MCF 10A (cell line): ENCODE measurements at regions of chr13 and their contacts with region 1.

Region 1: DNA sequence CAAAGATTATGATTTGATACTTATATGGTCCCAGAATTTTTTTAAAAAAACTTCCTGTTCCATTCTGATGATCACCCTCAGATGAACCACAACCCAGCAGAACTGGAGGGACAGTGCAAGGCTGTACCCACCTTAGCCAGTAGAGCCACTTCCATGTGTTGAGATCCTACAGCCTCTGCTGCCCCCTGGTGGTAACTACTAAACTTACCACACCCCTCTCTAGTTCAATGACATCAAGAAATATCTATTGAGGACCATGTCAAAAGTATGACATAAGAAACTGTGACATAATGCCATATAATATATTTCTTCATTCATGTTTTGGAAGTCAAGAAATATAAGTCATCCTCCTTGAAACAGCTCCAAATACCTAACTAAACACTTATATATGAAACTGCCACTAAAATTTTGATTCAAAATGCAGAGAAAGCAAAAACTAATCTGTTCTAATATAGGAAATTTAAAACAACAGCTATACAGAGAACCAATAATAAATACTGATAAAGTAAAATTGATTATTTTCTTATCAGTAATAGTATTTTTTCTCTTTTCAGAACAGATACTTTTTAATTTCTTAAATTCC is 412.6 kb downstream of the KCTD12 start:
- DNase-seq: peak; percentile 86
- H3K4me3 Mint-ChIP-seq: no peak overlapping the region
- H3K27ac Mint-ChIP-seq: no peak overlapping the region
- H3K4me1 Mint-ChIP-seq: no peaks in the 10 kb centered on the region
- H3K27me3 Mint-ChIP-seq: no peaks in the 10 kb centered on the region
- CTCF ChIP-seq: peak; percentile 87

Region 2: GRCh38 chr13:74675182-74675581 is 1798.5 kb before region 1 on chr13:
- CTCF ChIA-PET with region 1: no interaction called
- POLR2A ChIA-PET with region 1: no interaction called
- intact Hi-C with region 1: no loop called
- DNase-seq: peak; percentile 38
- H3K4me3 Mint-ChIP-seq: no peak overlapping the region
- H3K27ac Mint-ChIP-seq: no peak overlapping the region
- H3K4me1 Mint-ChIP-seq: no peaks in the 10 kb centered on the region
- H3K27me3 Mint-ChIP-seq: no peaks in the 10 kb centered on the region
- CTCF ChIP-seq: no peak

Region 3: DNA sequence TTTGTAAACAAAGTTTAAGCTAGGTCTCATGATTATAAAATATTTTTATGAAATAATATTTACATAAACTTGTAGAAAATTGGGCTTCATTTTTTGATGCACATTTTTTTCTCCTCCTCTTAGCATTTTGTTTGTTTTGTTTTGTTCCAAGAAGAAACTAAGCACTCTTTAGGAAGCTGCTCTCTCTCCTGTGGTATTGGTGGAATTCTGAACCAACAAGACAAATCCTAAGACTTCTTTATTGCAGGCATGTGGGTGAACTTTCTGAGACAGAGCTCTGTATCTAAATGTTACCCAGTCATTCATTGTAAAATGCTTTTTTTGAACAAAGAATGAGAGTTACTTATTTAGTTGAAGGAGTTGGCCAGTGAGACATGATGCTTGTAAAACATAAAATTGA is 798.2 kb before region 1 on chr13:
- CTCF ChIA-PET with region 1: interaction called, 4 read pairs
- POLR2A ChIA-PET with region 1: no interaction called
- intact Hi-C with region 1: loop called (anchors 2 kb)
- DNase-seq: peak; percentile 20
- H3K4me3 Mint-ChIP-seq: peak overlapping the region; percentile 79
- H3K27ac Mint-ChIP-seq: peak overlapping the region; percentile 93
- H3K4me1 Mint-ChIP-seq: peaks cover 8% of the 10 kb centered on the region
- H3K27me3 Mint-ChIP-seq: no peaks in the 10 kb centered on the region
- CTCF ChIP-seq: no peak

Region 4: DNA sequence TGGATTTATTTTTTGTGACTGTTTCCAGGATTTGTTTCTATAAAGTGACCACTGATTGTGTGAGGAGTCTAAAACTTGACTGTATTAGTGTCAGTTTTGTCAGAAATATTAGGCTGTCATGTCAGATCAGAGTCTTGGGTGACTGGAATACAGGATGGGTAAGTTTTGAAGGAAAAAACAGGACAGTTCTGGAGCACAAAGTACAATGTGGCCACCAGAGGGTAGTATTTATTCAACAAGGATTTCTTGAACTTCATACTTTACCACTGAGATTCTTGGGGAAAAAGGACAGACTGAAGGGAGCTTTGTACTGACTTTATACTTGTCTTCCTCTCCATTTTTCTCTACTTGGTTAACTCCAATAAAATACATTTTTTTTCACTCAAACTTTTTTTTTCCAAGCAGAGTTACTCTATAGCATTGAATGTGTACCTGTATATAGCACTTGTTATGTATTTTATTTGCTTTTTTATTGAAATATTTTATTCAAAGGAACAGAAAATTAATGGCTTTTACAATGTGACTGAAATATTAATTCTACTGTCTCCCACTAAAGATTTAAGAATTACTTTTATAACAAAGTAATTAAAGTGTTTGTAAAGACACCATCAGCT is 786.4 kb before region 1 on chr13:
- CTCF ChIA-PET with region 1: interaction called, 5 read pairs
- POLR2A ChIA-PET with region 1: no interaction called
- intact Hi-C with region 1: loop called (anchors 1 kb)
- DNase-seq: peak; percentile 59
- H3K4me3 Mint-ChIP-seq: no peak overlapping the region
- H3K27ac Mint-ChIP-seq: no peak overlapping the region
- H3K4me1 Mint-ChIP-seq: peaks cover 18% of the 10 kb centered on the region
- H3K27me3 Mint-ChIP-seq: no peaks in the 10 kb centered on the region
- CTCF ChIP-seq: peak; percentile 49

Region 5: DNA sequence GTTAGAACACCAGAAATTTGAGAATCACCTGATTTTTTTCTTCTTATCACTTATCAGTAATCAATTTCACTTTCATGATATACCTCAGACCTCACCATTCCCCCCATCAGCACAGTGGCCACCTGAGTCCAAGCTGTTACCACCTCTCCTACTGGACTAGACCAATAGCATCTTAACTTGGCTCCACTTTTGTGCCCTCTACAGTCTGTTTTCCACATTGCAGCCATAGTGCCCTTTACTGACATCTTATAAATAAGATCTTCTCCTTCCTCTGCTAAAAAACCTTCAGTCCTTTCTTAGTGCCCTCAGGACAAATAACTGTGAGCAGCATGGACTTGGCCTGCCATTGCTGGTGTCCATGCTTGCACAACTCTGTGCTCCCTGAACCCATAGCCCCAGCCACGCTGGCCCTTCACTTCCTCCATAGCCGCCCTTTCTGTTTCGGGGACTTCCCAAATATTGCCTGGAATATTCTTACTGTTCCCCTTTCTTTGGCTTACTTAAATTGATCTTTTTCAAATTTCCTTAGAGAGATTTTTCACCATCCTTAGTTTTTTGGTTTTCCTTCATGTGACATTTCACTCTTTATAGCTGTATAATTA is 456.7 kb before region 1 on chr13:
- CTCF ChIA-PET with region 1: interaction called, 3 read pairs
- POLR2A ChIA-PET with region 1: no interaction called
- intact Hi-C with region 1: loop called (anchors 5 kb)
- DNase-seq: peak; percentile 62
- H3K4me3 Mint-ChIP-seq: no peak overlapping the region
- H3K27ac Mint-ChIP-seq: no peak overlapping the region
- H3K4me1 Mint-ChIP-seq: no peaks in the 10 kb centered on the region
- H3K27me3 Mint-ChIP-seq: no peaks in the 10 kb centered on the region
- CTCF ChIP-seq: peak; percentile 53

Region 6: DNA sequence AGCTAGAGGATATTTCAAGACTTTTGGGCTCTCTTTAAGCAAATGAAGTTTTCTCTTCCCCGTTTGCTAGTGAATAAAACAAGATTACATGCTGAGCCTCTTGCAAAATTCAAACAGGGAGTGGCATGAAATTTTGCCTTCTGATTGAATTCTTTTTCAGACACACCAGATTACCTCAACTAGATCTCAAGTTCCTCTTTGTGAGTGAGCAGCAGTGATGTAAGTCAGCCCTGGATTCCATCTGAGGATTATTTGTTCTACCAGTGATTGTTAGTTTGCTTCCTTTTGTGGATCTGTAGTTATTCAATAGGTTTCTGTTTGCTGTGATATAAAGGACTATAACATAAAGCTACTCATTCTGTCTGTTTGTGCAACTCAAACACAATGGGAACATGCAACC is 429.8 kb before region 1 on chr13:
- CTCF ChIA-PET with region 1: no interaction called
- POLR2A ChIA-PET with region 1: no interaction called
- intact Hi-C with region 1: loop called (anchors 5 kb)
- DNase-seq: peak; percentile 10
- H3K4me3 Mint-ChIP-seq: no peak overlapping the region
- H3K27ac Mint-ChIP-seq: no peak overlapping the region
- H3K4me1 Mint-ChIP-seq: peaks cover 11% of the 10 kb centered on the region
- H3K27me3 Mint-ChIP-seq: no peaks in the 10 kb centered on the region
- CTCF ChIP-seq: no peak

Region 7: DNA sequence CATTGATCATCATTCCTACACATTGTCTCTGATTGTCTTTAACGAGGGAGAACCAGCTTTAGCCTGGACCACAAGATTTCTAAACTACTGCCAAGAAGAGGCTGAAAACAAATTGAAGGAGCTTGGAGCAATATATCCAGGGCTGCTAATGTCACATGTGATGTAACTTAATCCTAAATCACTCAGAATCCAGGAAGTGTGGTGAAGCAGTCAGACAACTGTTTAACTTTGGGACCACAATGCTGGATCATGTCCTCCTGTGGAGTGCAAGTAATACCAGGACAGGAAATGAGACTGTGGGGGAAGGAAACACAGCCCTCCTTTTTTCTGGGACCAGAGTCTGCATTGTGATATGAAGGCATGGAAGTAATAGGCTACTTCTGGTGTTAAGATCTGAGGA is 17.7 kb before region 1 on chr13:
- CTCF ChIA-PET with region 1: no interaction called
- POLR2A ChIA-PET with region 1: no interaction called
- intact Hi-C with region 1: no loop called
- DNase-seq: no peak
- H3K4me3 Mint-ChIP-seq: no peak overlapping the region
- H3K27ac Mint-ChIP-seq: no peak overlapping the region
- H3K4me1 Mint-ChIP-seq: peaks cover 5% of the 10 kb centered on the region
- H3K27me3 Mint-ChIP-seq: no peaks in the 10 kb centered on the region
- CTCF ChIP-seq: no peak

Region 8: DNA sequence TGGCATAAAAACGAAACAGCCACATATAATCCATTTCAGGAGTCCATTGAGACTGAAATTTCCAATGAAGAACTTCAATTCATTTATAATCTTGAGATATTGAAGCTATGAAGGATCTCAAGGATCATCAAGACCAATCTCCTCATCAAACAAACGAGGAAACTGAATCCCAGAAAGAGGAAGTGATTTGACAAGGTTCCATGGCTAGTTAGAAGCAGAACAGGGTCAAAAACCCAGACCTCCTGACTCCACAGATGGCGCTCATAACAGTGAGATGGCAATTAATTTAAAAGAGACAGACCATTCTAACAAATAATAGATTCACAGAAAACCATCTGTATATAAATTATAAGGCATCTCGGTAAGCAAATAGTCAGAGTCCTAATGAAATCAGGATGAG is 182.9 kb after region 1 on chr13:
- CTCF ChIA-PET with region 1: no interaction called
- POLR2A ChIA-PET with region 1: no interaction called
- intact Hi-C with region 1: no loop called
- DNase-seq: no peak
- H3K4me3 Mint-ChIP-seq: no peak overlapping the region
- H3K27ac Mint-ChIP-seq: peak overlapping the region; percentile 46
- H3K4me1 Mint-ChIP-seq: peaks cover 11% of the 10 kb centered on the region
- H3K27me3 Mint-ChIP-seq: no peaks in the 10 kb centered on the region
- CTCF ChIP-seq: no peak